Activated CD4-positive, alpha-beta T cell treated with anti-CD3 and anti-CD28 coated beads for 36 hours (primary cell): ENCODE measurements at regions of chr22 and their contacts with region 1.

Region 1: DNA sequence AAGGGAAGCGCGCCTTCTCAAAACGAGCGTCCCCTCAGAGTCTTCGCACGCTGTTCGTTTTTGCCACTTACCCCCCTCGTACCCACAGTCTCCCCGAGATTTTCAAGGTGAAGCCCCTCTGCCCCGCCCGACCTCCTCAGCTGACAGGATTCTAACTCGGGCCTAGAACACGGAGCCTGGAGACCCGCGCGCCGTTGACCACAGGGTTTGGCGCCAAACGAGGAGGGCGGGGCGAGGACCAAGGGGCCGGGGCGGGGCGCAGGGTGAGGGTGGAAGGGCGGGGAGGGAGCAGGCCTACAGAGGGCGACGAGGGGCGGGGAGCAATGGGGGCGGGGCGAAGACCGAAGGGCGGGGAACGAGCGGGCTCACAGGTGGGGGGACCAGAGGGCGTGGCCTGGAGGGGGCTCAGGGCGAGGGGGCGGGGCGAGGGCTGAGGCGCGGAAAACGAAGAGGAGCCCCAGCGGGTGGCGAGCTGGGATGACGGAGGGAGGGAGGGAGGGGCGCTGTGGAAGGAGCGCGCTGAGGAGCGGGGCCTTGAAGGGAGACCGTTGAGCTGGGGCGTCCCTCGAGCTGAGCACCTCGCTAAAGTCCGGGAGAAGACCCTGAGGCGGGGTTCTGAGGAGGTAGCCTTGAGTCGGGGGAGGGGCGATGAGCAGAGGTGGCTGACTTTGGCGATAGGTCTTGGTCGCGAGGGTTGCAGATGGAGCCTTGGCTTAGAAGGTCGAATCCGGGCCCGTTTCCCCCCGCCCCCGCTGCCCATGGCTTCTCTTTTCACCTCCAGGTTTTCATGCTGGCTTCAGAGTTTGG is at the start of gene DMC1:
- DNase-seq: peak; percentile 100
- ATAC-seq: peak; percentile 94
- H3K4me3 Mint-ChIP-seq: peak within 1 kb of the TSS; percentile 95
- H3K27ac Mint-ChIP-seq: peak within 1 kb of the TSS; percentile 97
- H3K4me1 Mint-ChIP-seq: peaks cover 16% of the 10 kb centered on the region
- H3K27me3 Mint-ChIP-seq: no peaks in the 10 kb centered on the region
- total RNA-seq, gene DMC1: 16.3 to 18.9 TPM

Region 2: DNA sequence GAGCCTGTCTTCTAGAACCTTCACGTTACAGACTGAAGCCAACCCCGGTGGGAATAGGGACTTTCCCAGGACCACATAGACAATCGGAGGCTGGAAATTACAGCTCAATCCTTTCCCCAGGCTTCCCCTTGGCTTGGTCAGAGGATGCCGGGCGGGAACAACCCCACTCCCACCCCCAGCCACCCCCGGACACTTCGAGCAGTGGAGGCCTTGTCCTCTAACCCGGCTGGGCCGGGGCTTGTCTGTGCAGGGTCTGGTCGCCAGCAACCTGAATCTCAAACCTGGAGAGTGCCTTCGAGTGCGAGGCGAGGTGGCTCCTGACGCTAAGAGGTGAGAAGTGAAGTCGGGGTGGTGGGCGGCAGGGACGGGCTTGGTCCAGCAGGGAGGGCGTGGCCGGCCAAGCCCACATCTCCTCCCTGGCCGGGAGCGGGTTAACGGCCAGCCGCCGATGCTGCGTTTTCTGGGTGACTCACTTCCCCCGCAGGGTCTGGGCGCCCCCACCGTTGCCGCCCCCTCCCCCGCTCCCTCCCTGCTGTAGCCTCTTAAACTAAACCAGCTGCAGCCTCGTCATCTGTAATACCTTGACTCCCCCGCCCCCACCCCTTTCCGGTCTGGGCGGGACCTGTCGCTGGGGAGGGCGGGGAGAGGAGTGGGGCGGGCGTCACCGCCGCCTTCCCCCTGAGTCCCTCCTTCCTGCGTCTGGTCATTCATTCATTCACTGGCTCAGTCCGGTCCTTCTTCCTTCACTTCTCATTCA is 893.3 kb before region 1 on chr22:
- CTCF ChIA-PET with region 1: no interaction called
- POLR2A ChIA-PET with region 1: no interaction called
- intact Hi-C with region 1: loop called in 1 of 2 experiments (anchors 1 kb)
- DNase-seq: peak; percentile 97
- ATAC-seq: peak; percentile 78
- H3K4me3 Mint-ChIP-seq: peak overlapping the region; percentile 89
- H3K27ac Mint-ChIP-seq: peak overlapping the region; percentile 96
- H3K4me1 Mint-ChIP-seq: peaks cover 57% of the 10 kb centered on the region
- H3K27me3 Mint-ChIP-seq: no peaks in the 10 kb centered on the region

Region 3: GRCh38 chr22:38051900-38052862 is 518.0 kb before region 1 on chr22:
- CTCF ChIA-PET with region 1: interaction called, 10 read pairs
- POLR2A ChIA-PET with region 1: no interaction called
- intact Hi-C with region 1: loop called (anchors 1 to 10 kb)
- DNase-seq: peak; percentile 87
- ATAC-seq: peak; percentile 83
- H3K4me3 Mint-ChIP-seq: no peak overlapping the region
- H3K27ac Mint-ChIP-seq: no peak overlapping the region
- H3K4me1 Mint-ChIP-seq: peaks cover 7% of the 10 kb centered on the region
- H3K27me3 Mint-ChIP-seq: peaks cover 7% of the 10 kb centered on the region

Region 4: GRCh38 chr22:38317122-38317994 is 252.8 kb before region 1 on chr22 and contains the start of gene CSNK1E:
- CTCF ChIA-PET with region 1: no interaction called
- POLR2A ChIA-PET with region 1: no interaction called
- intact Hi-C with region 1: loop called in 1 of 2 experiments (anchors 1 kb)
- DNase-seq: peak; percentile 84
- ATAC-seq: peak; percentile 63
- H3K4me3 Mint-ChIP-seq: peak within 1 kb of the TSS; percentile 90
- H3K27ac Mint-ChIP-seq: peak within 1 kb of the TSS; percentile 94
- H3K4me1 Mint-ChIP-seq: peaks cover 41% of the 10 kb centered on the region
- H3K27me3 Mint-ChIP-seq: no peaks in the 10 kb centered on the region
- total RNA-seq, gene CSNK1E: 117 to 145 TPM

Region 5: DNA sequence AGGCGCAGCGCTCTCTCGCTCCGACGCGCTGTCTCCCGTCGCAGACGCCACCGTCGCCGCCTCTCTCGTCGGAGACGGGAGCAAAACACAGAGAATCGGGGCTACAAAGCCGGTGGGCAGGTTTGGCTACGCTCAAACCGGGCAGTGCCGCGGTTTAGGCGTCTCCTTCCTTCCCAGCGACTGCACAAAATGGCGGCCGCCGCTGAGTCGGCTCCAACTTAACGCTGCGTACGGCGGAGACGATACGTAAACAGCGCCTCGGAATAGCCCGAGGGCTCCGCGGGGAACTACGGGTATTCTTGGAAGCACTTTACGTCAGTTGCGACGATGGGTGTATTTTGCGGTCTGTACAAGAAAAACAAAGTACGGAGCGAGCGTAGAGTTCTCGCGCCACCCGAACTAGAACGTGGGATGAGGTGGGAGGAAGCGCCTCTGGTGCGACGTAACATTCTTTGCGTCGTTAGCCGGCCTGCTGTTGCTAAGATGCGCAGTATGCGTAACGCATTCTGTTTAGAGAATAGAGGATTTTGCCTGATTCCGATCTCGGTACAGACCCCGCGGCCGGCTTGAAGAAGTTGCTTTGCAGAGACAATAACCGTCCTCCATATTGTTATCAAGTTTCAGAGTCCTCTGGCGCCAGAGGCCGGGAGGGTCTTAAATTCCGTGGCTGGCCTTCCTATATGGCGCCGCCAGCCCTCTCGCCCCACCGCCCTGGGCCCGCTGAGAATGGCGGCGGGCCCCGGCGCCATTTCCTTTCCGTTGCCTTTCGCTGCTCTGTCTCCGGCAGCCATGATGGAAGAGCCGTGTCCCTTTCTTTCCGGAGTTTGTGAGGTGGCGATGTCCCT is 63.8 kb before region 1 on chr22 and contains the start of gene DDX17:
- CTCF ChIA-PET with region 1: interaction called, 4 read pairs
- POLR2A ChIA-PET with region 1: interaction called, 3 read pairs
- intact Hi-C with region 1: loop called (anchors 1 to 2 kb)
- DNase-seq: peak; percentile 95
- ATAC-seq: peak; percentile 89
- H3K4me3 Mint-ChIP-seq: peak within 1 kb of the TSS; percentile 89
- H3K27ac Mint-ChIP-seq: peak within 1 kb of the TSS; percentile 100
- H3K4me1 Mint-ChIP-seq: peaks cover 36% of the 10 kb centered on the region
- H3K27me3 Mint-ChIP-seq: no peaks in the 10 kb centered on the region
- total RNA-seq, gene DDX17: 259 to 328 TPM

Region 6: GRCh38 chr22:38755911-38756532 is 185.8 kb after region 1 on chr22 and contains the start of gene SUN2:
- CTCF ChIA-PET with region 1: no interaction called
- POLR2A ChIA-PET with region 1: no interaction called
- intact Hi-C with region 1: loop called in 1 of 2 experiments (anchors 2 kb)
- DNase-seq: peak; percentile 96
- ATAC-seq: peak; percentile 74
- H3K4me3 Mint-ChIP-seq: peak within 1 kb of the TSS; percentile 92
- H3K27ac Mint-ChIP-seq: peak within 1 kb of the TSS; percentile 94
- H3K4me1 Mint-ChIP-seq: peaks cover 58% of the 10 kb centered on the region
- H3K27me3 Mint-ChIP-seq: no peaks in the 10 kb centered on the region
- total RNA-seq, gene SUN2: 87.2 to 102 TPM